ENCODE measurements at regions of chr12 and their contacts with region 1.

Region 1: DNA sequence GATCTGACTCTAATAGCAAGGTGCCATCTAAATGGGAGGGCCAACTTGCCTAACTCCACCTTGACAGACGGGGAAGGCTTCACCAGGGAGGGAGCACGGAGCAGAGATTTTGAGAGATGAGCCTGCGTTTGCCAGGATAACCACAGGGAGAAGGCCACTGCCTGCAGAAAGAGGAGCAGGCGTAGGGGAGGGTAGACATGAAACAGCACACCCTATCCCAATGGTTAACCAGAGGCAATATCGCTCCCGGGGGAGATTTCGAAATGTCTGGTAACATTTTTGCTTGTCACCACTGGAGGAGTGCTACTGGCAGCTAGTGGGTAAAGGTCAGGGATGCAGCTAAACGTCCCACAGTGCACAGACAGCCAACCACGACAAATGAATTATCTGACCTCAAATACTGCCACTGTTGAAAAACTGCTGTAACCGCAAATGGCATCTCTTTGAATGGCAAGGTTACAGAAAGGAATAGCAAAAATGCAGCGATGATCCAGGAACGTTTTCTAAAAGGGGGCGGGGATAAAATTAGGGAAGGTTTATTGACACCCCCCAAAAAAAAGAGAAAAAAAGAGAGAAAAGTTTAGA is 126.0 kb upstream of the ATF7IP start:
- DNase-seq: peak; percentile 60
- H3K4me3 Mint-ChIP-seq: peak overlapping the region; percentile 64
- H3K27ac Mint-ChIP-seq: peak overlapping the region; percentile 93
- H3K4me1 Mint-ChIP-seq: peaks cover 34% of the 10 kb centered on the region
- H3K27me3 Mint-ChIP-seq: no peaks in the 10 kb centered on the region
- CTCF ChIP-seq: peak; percentile 26

Region 2: DNA sequence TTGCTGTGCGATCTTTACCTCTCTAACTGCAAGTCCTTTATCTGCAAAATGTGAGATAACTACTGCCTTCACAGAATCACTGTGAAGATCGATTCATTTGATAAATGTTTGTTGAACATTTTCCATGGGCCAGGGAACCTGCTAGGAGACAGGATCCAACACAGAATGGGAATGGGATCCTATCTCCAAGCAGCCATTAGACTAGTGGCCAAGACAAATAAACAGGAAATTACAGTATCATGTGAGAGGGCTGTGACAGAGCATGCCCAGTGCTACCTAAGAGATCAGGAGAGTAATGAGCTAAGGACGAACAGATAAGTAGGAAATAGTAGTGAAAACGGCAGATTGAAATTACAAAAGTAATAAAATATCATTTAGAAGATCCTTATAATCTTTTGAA is 363.7 kb before region 1 on chr12:
- CTCF ChIA-PET with region 1: no interaction called
- intact Hi-C with region 1: no loop called
- DNase-seq: no peak
- H3K4me3 Mint-ChIP-seq: no peak overlapping the region
- H3K27ac Mint-ChIP-seq: no peak overlapping the region
- H3K4me1 Mint-ChIP-seq: no peaks in the 10 kb centered on the region
- H3K27me3 Mint-ChIP-seq: no peaks in the 10 kb centered on the region
- CTCF ChIP-seq: no peak

Region 3: DNA sequence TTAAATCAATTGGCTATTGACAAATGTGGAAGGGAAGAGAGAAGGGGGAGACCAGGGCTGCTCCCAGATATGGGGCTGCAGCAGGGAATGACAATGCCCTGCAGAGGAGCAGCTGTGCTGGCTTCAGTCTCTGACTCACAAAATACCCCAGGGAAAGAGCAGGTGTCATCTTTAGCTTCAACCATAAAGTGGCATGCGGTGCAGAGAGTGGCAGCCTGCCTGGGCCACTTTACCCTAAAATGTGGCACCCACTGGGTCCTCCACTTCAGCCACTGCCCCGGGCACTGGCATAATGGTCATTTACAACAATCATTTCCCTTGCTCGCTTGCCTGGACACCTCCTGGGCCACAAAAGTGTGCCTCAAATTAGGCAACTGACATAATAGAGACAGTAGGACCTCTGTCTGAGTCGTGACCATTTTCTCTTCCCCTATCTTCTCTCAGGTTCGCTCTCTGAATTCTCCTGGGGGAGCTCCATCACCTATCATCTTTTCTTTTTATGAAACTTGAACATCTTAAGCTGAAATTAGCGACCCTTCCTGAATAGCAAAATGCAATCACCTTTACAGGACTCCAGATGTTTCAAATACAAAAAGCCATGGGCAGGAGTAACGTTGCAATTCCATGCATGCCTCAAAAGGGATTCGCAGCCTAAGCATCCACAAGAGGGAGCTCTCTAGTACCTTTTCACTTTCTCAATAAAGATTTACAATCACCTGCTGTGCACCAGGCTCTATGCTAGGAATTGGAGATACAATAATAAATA is 53.8 kb before region 1 on chr12:
- CTCF ChIA-PET with region 1: interaction called, 8 read pairs
- intact Hi-C with region 1: loop called (anchors 10 kb)
- DNase-seq: peak; percentile 47
- H3K4me3 Mint-ChIP-seq: no peak overlapping the region
- H3K27ac Mint-ChIP-seq: no peak overlapping the region
- H3K4me1 Mint-ChIP-seq: peaks cover 28% of the 10 kb centered on the region
- H3K27me3 Mint-ChIP-seq: no peaks in the 10 kb centered on the region
- CTCF ChIP-seq: peak; percentile 44

Region 4: DNA sequence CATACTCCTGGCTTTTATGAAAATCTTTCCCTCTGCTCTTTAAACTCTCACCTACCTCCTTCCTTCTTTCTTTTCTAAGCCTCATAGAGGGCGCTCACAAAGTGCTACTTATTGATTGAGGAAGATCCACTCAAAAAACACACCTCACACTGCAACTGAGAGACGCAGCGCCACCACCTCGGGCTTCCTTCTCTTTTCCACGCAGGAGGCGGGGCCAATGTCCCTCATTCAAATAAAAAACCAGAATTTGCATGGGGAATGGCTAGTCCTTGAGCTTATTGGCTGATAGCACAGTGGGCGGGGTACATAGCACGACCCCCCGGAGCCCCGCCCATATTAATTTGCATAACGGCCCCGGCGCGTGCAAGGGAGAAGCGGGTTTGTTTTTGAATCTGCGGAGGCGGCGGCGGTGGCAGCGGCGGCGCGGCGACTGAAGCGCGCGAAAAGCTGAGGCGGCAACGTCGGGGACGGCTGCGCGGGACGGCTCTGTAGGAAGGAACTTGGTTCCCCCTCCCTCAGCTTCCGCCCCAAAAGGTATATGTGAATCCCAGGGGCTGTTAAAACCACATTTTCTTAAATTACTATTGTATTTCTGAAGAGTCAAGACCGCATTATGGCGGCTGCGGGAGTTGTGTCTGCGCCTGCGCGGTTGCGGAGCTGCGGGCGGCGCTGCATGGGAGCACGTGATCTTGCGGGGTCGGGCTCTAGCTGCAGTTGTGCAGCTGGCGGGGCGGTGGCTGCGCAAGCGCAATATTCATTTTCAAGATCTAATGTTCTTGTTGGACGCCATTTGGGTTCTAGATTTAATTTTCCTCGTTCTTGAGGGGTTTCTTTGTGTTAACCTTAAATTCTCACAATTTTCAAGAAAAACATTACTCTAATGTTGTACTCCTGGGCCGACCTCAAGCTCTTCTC is 126.1 kb after region 1 on chr12 and contains the start of gene ATF7IP:
- CTCF ChIA-PET with region 1: interaction called, 14 read pairs
- intact Hi-C with region 1: loop called (anchors 1 kb)
- DNase-seq: peak; percentile 95
- H3K4me3 Mint-ChIP-seq: peak within 1 kb of the TSS; percentile 53
- H3K27ac Mint-ChIP-seq: peak within 1 kb of the TSS; percentile 29
- H3K4me1 Mint-ChIP-seq: no peaks in the 10 kb centered on the region
- H3K27me3 Mint-ChIP-seq: no peaks in the 10 kb centered on the region
- CTCF ChIP-seq: no peak
- total RNA-seq, gene ATF7IP: 72.7 and 89.0 TPM in 2 replicates

Region 5: DNA sequence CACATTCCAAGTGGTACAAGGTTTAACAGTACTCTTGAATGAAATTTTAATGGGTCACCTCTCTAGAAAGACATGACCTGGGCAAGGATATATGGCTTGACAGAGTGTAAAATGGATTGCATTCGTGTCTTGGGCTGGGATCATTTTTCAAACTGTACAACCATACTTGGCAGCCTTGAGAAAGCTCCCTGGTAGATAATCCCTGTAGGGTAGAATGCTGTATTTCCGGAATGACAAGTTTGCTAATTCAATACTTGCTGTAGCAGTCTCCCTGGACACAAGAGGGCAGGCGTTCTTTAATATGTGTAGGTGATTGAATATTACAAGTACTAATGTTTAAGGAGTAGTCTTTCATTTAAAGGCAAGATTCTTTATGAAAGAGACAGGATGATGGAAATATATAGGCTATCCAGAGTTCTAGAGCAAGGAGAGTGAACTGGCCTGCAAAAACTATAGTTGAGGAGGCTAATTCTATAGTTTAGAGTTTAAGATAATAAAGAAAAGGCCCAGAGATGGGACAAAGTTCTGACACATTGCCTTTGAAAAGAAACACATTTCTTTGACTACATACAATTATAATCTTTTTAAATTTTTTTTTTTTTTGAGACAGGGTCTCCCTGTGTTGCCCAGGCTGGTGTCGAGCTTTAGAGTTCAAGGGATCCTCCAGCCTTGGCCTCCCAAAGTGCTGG is 274.9 kb after region 1 on chr12:
- CTCF ChIA-PET with region 1: interaction called, 14 read pairs
- intact Hi-C with region 1: loop called (anchors 2 kb)
- DNase-seq: peak; percentile 72
- H3K4me3 Mint-ChIP-seq: no peak overlapping the region
- H3K27ac Mint-ChIP-seq: peak overlapping the region; percentile 63
- H3K4me1 Mint-ChIP-seq: peaks cover 24% of the 10 kb centered on the region
- H3K27me3 Mint-ChIP-seq: no peaks in the 10 kb centered on the region
- CTCF ChIP-seq: peak; percentile 64

Region 6: DNA sequence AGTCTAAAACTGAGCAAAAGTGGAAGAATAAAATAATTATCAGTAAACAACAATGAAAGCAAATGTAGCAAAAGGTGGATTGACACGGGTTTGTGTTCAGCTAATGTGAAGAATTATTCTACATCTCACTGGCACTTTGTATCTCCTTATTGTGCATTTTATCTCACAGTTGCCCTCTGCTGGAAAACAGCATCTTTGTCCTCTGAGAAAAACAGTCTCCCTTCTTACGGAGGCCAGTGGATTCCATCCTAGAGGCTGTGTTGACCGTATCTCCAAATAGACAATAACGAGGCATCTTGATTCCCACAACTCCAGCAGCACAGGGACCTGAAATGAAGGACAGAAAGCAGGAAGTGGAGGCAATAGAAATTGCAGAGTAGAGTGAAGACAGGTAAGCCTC is 379.5 kb after region 1 on chr12:
- CTCF ChIA-PET with region 1: interaction called, 8 read pairs
- intact Hi-C with region 1: loop called (anchors 5 kb)
- DNase-seq: peak; percentile 25
- H3K4me3 Mint-ChIP-seq: peak overlapping the region; percentile 24
- H3K27ac Mint-ChIP-seq: peak overlapping the region; percentile 35
- H3K4me1 Mint-ChIP-seq: peaks cover 27% of the 10 kb centered on the region
- H3K27me3 Mint-ChIP-seq: no peaks in the 10 kb centered on the region
- CTCF ChIP-seq: no peak

Region 7: DNA sequence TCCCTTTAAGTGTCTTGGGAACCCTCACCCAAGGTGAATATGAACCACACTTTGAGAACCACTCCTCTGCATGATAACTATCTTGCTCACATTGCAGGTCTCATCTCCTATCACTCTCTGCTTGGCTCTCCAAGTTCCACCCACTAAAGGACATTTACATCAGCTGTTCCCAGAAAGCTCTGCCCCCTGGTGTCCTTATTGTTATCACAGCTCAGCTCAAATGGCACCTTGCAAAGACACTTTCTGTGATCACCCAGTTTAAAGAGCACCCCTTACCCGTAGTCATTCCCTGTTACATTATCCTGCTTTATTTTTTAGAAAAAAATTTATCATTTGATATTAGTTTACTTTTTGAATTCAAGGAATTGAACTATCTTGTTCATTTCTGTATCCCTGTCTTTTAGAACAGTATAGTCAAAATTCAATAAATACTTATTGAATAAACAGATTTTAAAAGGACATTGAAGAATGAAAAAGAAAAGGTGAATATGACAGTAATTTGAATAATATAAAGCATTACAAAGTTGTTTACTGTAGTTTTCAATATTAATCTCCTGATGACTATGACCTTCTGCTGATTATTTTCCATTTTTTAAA is 477.5 kb after region 1 on chr12:
- CTCF ChIA-PET with region 1: interaction called, 4 read pairs
- intact Hi-C with region 1: loop called (anchors 2 kb)
- DNase-seq: peak; percentile 55
- H3K4me3 Mint-ChIP-seq: no peak overlapping the region
- H3K27ac Mint-ChIP-seq: no peak overlapping the region
- H3K4me1 Mint-ChIP-seq: no peaks in the 10 kb centered on the region
- H3K27me3 Mint-ChIP-seq: no peaks in the 10 kb centered on the region
- CTCF ChIP-seq: peak; percentile 38

Measured in Calu3 (cell line).